OCI-LY7 (cell line): ENCODE measurements at regions of chr1 and their contacts with region 1.

Region 1: GRCh38 chr1:117534995-117535467 is 70.8 kb upstream of the TENT5C start:
- DNase-seq: peak; percentile 85
- H3K4me3 ChIP-seq: no peak overlapping the region
- H3K27ac ChIP-seq: no peak overlapping the region
- H3K4me1 ChIP-seq: peaks cover 35% of the 10 kb centered on the region
- CTCF ChIP-seq: peak; percentile 94

Region 2: GRCh38 chr1:117268535-117269455 is 266.2 kb before region 1 on chr1:
- CTCF ChIA-PET with region 1: no interaction called
- POLR2A ChIA-PET with region 1: no interaction called
- intact Hi-C with region 1: no loop called
- DNase-seq: no peak
- H3K4me3 ChIP-seq: no peak overlapping the region
- H3K27ac ChIP-seq: no peak overlapping the region
- H3K4me1 ChIP-seq: no peaks in the 10 kb centered on the region
- CTCF ChIP-seq: no peak

Region 3: DNA sequence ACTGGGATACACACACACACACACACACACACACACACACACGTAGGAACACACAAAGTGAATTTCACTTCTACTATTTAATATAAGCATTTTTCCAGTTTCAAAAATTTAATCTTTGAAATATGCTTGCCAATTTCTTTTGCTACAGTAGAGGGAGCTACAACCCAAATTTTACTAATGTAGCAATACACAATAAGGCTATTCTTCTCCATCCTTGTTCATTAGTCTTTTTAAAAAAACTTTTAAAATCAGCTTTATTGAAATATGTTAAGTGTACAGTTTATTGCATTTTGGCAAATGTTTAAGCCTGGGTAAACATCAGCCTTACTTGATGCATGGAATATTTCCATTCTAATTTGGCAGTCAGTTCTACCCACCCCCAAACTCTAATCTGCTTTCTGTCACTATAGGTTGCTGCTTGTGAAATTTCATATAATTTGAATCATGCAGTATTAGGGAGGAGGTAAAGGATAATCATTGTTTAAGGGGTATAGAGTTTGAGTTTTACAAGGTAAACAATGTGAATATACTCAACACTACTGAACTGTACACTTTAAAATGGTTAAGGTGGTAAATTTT is 22.2 kb before region 1 on chr1:
- CTCF ChIA-PET with region 1: interaction called, 13 read pairs
- POLR2A ChIA-PET with region 1: no interaction called
- intact Hi-C with region 1: no loop called
- DNase-seq: peak; percentile 52
- H3K4me3 ChIP-seq: no peak overlapping the region
- H3K27ac ChIP-seq: no peak overlapping the region
- H3K4me1 ChIP-seq: no peaks in the 10 kb centered on the region
- CTCF ChIP-seq: peak; percentile 92

Region 4: DNA sequence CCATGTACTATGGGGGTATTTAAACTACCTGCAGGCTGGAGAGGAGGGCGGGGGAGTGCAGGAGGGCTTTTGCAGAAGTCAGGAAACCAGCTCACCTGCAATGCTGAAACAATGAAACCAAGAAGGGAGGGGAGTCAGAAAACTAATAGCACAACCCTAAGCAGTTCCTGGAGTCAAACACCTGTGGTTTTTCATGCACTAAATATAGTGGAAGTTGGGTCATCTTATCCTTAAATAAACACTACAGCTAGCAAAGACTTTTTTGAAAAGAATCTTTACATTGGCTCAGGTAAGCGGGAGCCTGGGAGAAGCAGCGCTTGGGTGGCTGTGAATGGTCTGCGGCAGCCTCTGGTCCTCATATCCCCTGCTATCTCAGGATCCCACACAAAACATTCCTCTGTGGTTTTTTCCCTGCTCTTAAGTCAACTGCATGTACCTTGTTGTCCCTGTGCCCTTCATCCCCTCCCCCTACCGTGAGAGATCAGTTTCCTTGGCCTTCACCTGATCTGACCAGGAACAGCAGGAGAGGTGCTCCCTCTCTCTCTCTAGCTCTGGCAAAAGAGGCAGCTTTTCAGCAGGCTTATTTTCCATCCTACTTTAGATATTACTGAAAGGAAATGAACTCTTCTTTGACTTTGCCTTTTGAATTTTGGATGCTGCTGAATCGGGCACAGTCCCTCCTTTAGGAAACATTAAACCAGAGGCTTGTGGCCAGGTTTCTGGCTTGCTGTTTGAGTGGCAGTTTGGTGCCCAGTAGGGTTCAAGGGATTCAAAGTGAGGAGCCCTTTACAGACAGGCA is 97.4 kb after region 1 on chr1:
- CTCF ChIA-PET with region 1: interaction called, 8 read pairs
- POLR2A ChIA-PET with region 1: interaction called, 11 read pairs
- intact Hi-C with region 1: no loop called
- DNase-seq: peak; percentile 83
- H3K4me3 ChIP-seq: peak overlapping the region; percentile 56
- H3K27ac ChIP-seq: peak overlapping the region; percentile 85
- H3K4me1 ChIP-seq: peaks cover 99% of the 10 kb centered on the region
- CTCF ChIP-seq: no peak

Region 5: DNA sequence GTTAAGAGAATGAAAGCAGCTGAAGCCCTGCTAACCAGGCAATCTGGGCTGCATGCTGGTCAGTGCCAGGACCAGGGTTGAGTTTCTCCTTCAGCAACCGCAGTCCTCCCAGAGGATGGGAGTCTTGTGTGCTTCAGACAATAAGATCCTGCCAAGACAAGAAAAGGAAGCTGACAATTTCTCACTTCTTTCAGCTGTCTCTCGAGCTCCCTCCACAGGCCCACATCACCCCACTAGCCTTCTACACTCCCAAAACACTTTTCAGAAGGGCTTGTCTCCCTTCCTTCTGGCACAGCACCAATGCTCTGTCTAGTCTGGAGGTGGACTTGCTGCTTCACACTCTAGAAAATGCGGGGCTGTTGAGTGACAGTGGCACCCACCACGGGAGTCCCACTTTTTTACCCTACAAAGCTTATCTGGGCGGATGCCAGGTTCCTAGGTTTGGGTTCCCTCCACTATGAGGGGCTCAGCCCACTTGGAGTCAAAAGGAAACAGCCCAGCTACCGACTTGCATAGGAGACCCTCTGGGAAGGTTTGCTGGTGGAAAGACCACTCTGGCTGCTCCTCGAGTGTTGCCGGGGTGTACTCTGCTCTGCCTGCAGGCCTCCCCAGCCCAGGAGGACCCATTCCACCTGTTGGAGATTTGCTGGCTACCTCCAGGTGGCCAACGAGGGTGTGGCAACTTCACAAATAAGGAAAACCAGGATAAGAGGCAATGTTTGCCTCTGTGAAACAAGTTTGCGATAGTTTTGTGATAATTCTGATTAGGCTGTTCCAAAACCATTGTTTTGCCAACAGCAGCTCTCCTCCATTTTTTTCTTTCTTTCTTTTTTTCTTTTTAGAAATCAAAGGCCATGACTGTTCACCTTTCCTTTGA is 139.7 kb after region 1 on chr1:
- CTCF ChIA-PET with region 1: interaction called, 18 read pairs
- POLR2A ChIA-PET with region 1: interaction called, 38 read pairs
- intact Hi-C with region 1: loop called (anchors 1 kb)
- DNase-seq: peak; percentile 87
- H3K4me3 ChIP-seq: no peak overlapping the region
- H3K27ac ChIP-seq: peak overlapping the region; percentile 1
- H3K4me1 ChIP-seq: peaks cover 54% of the 10 kb centered on the region
- CTCF ChIP-seq: peak; percentile 92

Region 6: GRCh38 chr1:117886101-117886795 is 351.2 kb after region 1 on chr1:
- CTCF ChIA-PET with region 1: interaction called, 10 read pairs
- POLR2A ChIA-PET with region 1: no interaction called
- intact Hi-C with region 1: no loop called
- DNase-seq: no peak
- H3K4me3 ChIP-seq: no peak overlapping the region
- H3K27ac ChIP-seq: no peak overlapping the region
- H3K4me1 ChIP-seq: no peaks in the 10 kb centered on the region
- CTCF ChIP-seq: no peak